Vagina (tissue), 2 donors: ENCODE measurements at regions of chr3 and their contacts with region 1.

Region 1: DNA sequence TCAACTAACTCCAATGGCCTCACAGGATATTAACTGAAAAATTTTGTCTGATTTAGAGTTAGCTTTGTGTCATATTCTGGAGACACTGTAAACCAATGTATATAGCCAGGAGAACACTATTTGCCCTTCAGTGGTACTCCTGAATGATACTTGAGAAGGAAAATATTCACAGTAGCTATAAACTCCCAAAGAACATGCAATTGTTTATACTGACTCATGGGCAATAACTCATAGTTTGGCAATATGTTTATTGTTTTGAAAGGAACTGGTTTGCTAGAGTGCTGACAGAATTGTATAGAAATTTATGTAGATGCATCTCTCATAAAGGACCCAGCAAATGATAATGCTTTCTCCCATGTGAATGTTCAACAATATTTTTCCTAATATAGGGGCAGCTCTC is 537.6 kb downstream of the PLOD2 start:
- DNase-seq: no peak
- H3K4me3 ChIP-seq: no peak overlapping the region
- H3K27ac ChIP-seq: no peak overlapping the region
- H3K4me1 ChIP-seq: peaks cover 8% of the 10 kb centered on the region
- H3K27me3 ChIP-seq: no peaks in the 10 kb centered on the region
- CTCF ChIP-seq: no peak
- POLR2A ChIP-seq: no peak

Region 2: DNA sequence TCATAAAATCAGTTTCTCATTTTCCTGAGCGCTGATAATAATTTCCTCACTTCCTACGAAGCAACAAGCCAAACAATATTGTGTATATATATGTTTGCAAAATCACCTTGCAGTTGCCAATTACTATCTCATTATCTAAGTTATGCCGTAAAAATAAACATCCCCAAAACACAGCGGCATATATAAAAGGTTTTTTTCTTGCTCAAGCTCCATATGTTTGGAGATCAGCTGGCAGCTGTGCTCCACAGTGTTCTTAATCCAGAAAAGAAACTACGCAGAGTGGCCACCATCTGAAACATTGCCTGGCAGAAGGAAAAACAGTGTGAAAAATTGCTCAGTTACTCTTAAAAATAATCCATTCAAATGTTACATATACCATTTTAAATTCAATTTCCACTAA is 413.8 kb before region 1 on chr3:
- intact Hi-C with region 1: no loop called
- DNase-seq: no peak
- H3K4me3 ChIP-seq: no peak overlapping the region
- H3K27ac ChIP-seq: no peak overlapping the region
- H3K4me1 ChIP-seq: no peaks in the 10 kb centered on the region
- H3K27me3 ChIP-seq: no peaks in the 10 kb centered on the region
- CTCF ChIP-seq: no peak
- POLR2A ChIP-seq: no peak

Region 3: GRCh38 chr3:145533696-145534095 is 89.7 kb before region 1 on chr3:
- intact Hi-C with region 1: loop called (anchors 2 kb)
- DNase-seq: no peak
- H3K4me3 ChIP-seq: no peak overlapping the region
- H3K27ac ChIP-seq: no peak overlapping the region
- H3K4me1 ChIP-seq: no peaks in the 10 kb centered on the region
- H3K27me3 ChIP-seq: no peaks in the 10 kb centered on the region
- CTCF ChIP-seq: no peak
- POLR2A ChIP-seq: no peak

Region 4: DNA sequence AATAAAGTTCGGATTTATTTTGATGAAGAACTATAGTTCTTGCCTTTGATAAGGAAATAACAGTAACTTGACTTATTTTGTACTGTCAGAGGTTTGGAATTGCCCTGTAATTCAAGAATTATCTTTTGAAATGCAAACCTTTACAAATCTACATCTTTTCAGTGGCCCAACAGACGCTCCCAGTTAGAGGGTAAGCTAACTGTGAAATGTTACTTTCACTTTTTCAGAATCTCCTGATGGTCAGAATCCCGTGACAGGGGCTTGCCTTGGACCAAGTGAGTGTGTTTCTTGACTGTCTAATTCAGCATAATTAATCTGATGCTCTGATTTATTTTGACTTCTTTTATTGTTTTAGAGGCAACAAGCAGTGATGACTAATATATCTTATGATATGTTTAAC is 275.1 kb after region 1 on chr3:
- intact Hi-C with region 1: no loop called
- DNase-seq: no peak
- H3K4me3 ChIP-seq: no peak overlapping the region
- H3K27ac ChIP-seq: no peak overlapping the region
- H3K4me1 ChIP-seq: no peaks in the 10 kb centered on the region
- H3K27me3 ChIP-seq: no peaks in the 10 kb centered on the region
- CTCF ChIP-seq: no peak
- POLR2A ChIP-seq: no peak

Region 5: DNA sequence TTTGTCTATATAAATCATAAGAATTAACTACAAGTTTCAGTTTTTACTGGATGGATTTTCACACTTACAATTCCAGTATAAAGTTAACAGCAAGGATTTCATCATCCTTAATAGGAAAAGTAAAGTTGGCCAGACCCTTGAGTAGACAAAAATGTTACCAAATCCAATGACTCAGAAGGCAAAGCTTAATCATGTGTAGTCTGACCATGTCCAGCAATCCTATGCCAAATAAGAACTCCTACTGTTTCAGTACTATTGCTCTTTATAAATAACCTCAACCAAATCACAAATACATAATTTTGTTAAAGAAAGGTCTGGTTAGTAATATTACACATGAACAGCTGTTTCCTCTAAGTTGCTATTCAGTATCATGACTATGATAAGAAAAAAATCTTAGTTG is 502.6 kb after region 1 on chr3:
- intact Hi-C with region 1: no loop called
- DNase-seq: no peak
- H3K4me3 ChIP-seq: no peak overlapping the region
- H3K27ac ChIP-seq: peak overlapping the region; percentile 36
- H3K4me1 ChIP-seq: peaks cover 24% of the 10 kb centered on the region
- H3K27me3 ChIP-seq: no peaks in the 10 kb centered on the region
- CTCF ChIP-seq: no peak
- POLR2A ChIP-seq: no peak

Region 6: GRCh38 chr3:147113293-147114044 is 1490.1 kb after region 1 on chr3:
- intact Hi-C with region 1: loop called (anchors 10 kb)
- DNase-seq: no peak
- H3K4me3 ChIP-seq: no peak overlapping the region
- H3K27ac ChIP-seq: no peak overlapping the region
- H3K4me1 ChIP-seq: no peaks in the 10 kb centered on the region
- H3K27me3 ChIP-seq: no peaks in the 10 kb centered on the region
- CTCF ChIP-seq: no peak
- POLR2A ChIP-seq: no peak